H1 (cell line): ENCODE measurements at regions of chrX and their contacts with region 1.

Region 1: DNA sequence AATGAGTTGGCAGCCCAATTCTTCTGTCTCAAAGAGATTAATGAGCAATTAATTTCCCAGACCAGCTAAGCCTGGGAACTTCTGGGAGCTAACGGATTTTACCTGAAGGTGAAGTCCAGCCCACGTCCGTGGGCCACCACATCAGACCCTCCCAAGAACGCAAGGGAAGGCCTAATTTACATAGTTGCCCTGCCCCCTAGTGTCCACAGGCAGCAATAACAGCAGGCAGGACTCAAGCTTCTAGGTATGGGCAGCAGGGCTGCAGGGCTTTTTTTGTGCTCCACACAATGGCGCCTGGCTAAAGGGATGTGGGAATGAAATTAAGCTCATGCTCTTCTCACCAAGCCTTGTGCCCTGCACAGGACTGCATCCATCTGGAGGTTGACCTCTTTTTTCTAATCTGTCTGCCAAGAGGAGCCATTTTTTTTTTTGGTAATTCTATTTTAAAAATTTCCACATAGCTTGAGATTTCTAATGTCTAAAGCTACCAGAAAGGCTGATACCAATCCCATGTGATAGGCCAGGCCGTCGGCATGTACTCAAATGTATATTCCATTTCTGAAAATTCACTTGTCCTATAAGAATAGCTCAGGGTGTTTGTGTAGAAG is 111.9 kb upstream of the TMEM164 start:
- DNase-seq: peak; percentile 10 to 60
- H3K4me3 ChIP-seq: no peak overlapping the region
- H3K27ac ChIP-seq: no peak overlapping the region
- H3K4me1 ChIP-seq: no peaks in the 10 kb centered on the region
- H3K27me3 ChIP-seq: no peaks in the 10 kb centered on the region
- CTCF ChIP-seq: peak; percentile 65 to 87 (median 71)
- EP300 ChIP-seq: no peak
- POLR2A ChIP-seq: no peak
- RAD21 ChIP-seq: peak; percentile 61 to 70

Region 2: GRCh38 chrX:109635176-109635575 is 255.8 kb before region 1 on chrX:
- CTCF ChIA-PET with region 1: interaction called, 30 read pairs
- POLR2A ChIA-PET with region 1: no interaction called
- DNase-seq: no peak
- H3K4me3 ChIP-seq: no peak overlapping the region
- H3K27ac ChIP-seq: no peak overlapping the region
- H3K4me1 ChIP-seq: no peaks in the 10 kb centered on the region
- H3K27me3 ChIP-seq: no peaks in the 10 kb centered on the region
- CTCF ChIP-seq: peak in 2 of 3 experiments; percentile 42 to 64; a peak in 3 of 4 replicates
- EP300 ChIP-seq: no peak
- POLR2A ChIP-seq: no peak
- RAD21 ChIP-seq: peak; percentile 27 to 39; a peak in 3 of 4 replicates

Region 3: DNA sequence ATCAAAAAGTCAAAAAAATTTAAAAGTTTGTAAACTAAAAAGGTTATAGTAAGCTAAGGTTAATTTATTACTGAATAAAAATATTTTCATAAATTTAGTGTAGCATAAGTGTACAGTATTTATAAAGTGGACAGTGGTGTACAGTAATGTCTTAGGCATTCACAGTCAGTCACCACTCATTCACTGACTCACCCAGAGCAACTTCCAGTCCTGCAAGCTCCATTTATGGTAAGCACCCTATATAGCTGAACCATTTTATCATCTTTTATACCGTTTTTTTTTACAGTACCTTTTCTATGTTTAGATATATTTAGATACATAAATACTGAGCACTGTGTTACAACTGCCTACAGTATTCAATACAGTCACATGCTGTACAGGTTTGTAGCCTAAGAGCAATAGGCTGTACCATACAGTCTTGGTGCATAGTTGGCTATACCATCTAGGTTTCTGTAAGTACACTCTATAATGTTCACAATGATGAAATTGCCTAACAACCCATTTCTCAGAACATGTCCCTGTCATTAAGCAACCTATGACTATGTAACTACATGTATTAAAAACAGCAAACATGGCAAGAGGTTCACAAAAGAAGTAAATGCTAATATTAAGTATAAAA is 176.6 kb before region 1 on chrX:
- CTCF ChIA-PET with region 1: interaction called, 93 read pairs
- POLR2A ChIA-PET with region 1: no interaction called
- DNase-seq: no peak
- H3K4me3 ChIP-seq: no peak overlapping the region
- H3K27ac ChIP-seq: no peak overlapping the region
- H3K4me1 ChIP-seq: no peaks in the 10 kb centered on the region
- H3K27me3 ChIP-seq: no peaks in the 10 kb centered on the region
- CTCF ChIP-seq: no peak
- EP300 ChIP-seq: no peak
- POLR2A ChIP-seq: no peak
- RAD21 ChIP-seq: no peak

Region 4: DNA sequence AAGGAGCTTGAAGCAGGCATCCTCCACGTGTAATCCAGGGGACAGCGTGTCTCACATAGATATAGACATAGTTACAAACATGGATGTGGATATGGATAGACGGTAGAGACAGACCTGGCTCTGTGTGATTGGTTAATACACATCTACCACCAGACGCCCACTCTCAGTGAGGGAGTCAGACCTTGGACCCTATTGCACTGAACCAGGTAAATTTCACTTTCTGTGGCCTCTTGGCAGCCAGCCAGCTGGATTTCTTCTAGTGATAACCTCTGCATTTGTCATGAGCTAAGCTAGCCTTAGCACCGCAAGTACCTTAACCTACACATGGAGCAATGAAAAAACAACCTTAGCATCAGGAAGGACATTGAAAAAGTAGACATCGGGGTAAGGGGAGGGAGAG is 78.8 kb before region 1 on chrX:
- CTCF ChIA-PET with region 1: no interaction called
- POLR2A ChIA-PET with region 1: no interaction called
- DNase-seq: no peak
- H3K4me3 ChIP-seq: no peak overlapping the region
- H3K27ac ChIP-seq: no peak overlapping the region
- H3K4me1 ChIP-seq: no peaks in the 10 kb centered on the region
- H3K27me3 ChIP-seq: no peaks in the 10 kb centered on the region
- CTCF ChIP-seq: no peak
- EP300 ChIP-seq: no peak
- POLR2A ChIP-seq: no peak
- RAD21 ChIP-seq: no peak

Region 5: GRCh38 chrX:109856974-109857373 is 34.0 kb before region 1 on chrX:
- CTCF ChIA-PET with region 1: interaction called, 12 read pairs
- POLR2A ChIA-PET with region 1: no interaction called
- DNase-seq: no peak
- H3K4me3 ChIP-seq: no peak overlapping the region
- H3K27ac ChIP-seq: no peak overlapping the region
- H3K4me1 ChIP-seq: no peaks in the 10 kb centered on the region
- H3K27me3 ChIP-seq: no peaks in the 10 kb centered on the region
- CTCF ChIP-seq: peak in 2 of 3 experiments; percentile 34 to 36; a peak in 2 of 4 replicates
- EP300 ChIP-seq: no peak
- POLR2A ChIP-seq: no peak
- RAD21 ChIP-seq: peak; percentile 57 to 60

Region 6: GRCh38 chrX:109878236-109878635 is 12.8 kb before region 1 on chrX:
- CTCF ChIA-PET with region 1: interaction called, 11 read pairs
- POLR2A ChIA-PET with region 1: no interaction called
- DNase-seq: no peak
- H3K4me3 ChIP-seq: no peak overlapping the region
- H3K27ac ChIP-seq: no peak overlapping the region
- H3K4me1 ChIP-seq: no peaks in the 10 kb centered on the region
- H3K27me3 ChIP-seq: no peaks in the 10 kb centered on the region
- CTCF ChIP-seq: no peak
- EP300 ChIP-seq: no peak
- POLR2A ChIP-seq: no peak
- RAD21 ChIP-seq: no peak